Psoas muscle (tissue), 8 donors: ENCODE measurements at regions of chr2 and their contacts with region 1.

Region 1: GRCh38 chr2:105062158-105062557 is 24.3 kb downstream of the MRPS9 start:
- DNase-seq: no peak
- ATAC-seq: no peak
- H3K4me3 ChIP-seq: no peak overlapping the region
- H3K27ac ChIP-seq: no peak overlapping the region
- H3K4me1 ChIP-seq: no peaks in the 10 kb centered on the region
- H3K27me3 ChIP-seq: no peaks in the 10 kb centered on the region
- CTCF ChIP-seq: no peak

Region 2: GRCh38 chr2:104983980-104984379 is 78.2 kb before region 1 on chr2:
- intact Hi-C with region 1: loop called in 1 of 2 experiments (anchors 2 kb)
- DNase-seq: no peak
- ATAC-seq: no peak
- H3K4me3 ChIP-seq: no peak overlapping the region
- H3K27ac ChIP-seq: no peak overlapping the region
- H3K4me1 ChIP-seq: no peaks in the 10 kb centered on the region
- H3K27me3 ChIP-seq: peaks cover 0 to 2% (median 0%) of the 10 kb centered on the region in 3 donors
- CTCF ChIP-seq: no peak